Activated T-helper 2 cell treated with anti-CD3 and anti-CD28 coated beads, Interferon-gamma antibody, Interleukin-2, Interleukin-4, amounts not matched to agents 10 μg/mL and 5 μg/mL and 100 μg/mL, durations not matched to agents 14 hours and 24 hours and 36 hours (primary cell): ENCODE measurements at regions of chr5 and their contacts with region 1.

Region 1: GRCh38 chr5:154189819-154190594 is 526 bp upstream of the GALNT10 start:
- DNase-seq: peak; percentile 76
- H3K4me3 Mint-ChIP-seq: peak overlapping the region; percentile 83
- H3K27ac Mint-ChIP-seq: peak overlapping the region; percentile 60
- H3K4me1 Mint-ChIP-seq: peaks cover 37% of the 10 kb centered on the region
- H3K27me3 Mint-ChIP-seq: peaks cover 17% of the 10 kb centered on the region

Region 2: GRCh38 chr5:153551537-153552079 is 638.4 kb before region 1 on chr5:
- intact Hi-C with region 1: no loop called
- DNase-seq: no peak
- H3K4me3 Mint-ChIP-seq: no peak overlapping the region
- H3K27ac Mint-ChIP-seq: no peak overlapping the region
- H3K4me1 Mint-ChIP-seq: peaks cover 2% of the 10 kb centered on the region
- H3K27me3 Mint-ChIP-seq: no peaks in the 10 kb centered on the region

Region 3: DNA sequence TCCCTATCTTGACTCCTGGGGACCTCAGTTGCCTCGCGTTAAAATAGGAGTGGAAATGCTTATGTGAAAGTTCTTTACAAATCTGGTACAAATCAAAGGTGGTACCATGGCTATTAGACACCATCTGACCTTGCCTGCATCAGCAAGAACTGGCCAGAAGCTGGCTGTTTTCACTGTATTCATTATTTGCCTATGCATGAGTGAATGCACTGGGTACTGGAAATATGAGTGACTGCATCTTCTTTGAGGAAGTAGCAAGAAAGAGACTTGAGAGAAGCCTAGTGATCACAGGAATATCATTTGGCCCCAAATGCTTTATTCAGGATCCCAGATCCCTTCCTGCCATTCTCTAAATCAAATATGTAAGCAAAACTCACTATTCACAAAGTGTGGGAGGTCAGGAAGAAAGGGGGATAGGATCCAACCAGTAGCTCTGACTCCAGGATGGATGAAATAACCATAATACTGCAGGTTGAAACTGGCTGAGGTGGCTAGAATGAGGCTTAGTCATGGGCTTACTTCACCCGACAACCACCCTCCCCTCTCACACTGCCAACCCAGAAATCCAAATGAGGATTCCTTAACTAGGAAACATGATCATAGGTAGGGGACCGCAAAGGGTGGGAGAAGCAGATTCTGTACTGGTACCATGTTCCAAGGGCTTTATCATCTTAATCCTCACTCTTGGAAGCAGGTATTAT is 208.0 kb before region 1 on chr5:
- intact Hi-C with region 1: no loop called
- DNase-seq: no peak
- H3K4me3 Mint-ChIP-seq: no peak overlapping the region
- H3K27ac Mint-ChIP-seq: no peak overlapping the region
- H3K4me1 Mint-ChIP-seq: no peaks in the 10 kb centered on the region
- H3K27me3 Mint-ChIP-seq: peaks cover 7% of the 10 kb centered on the region

Region 4: GRCh38 chr5:154202379-154203260 is 12.6 kb after region 1 on chr5:
- intact Hi-C with region 1: loop called (anchors 1 kb)
- DNase-seq: peak; percentile 40
- H3K4me3 Mint-ChIP-seq: peak overlapping the region; percentile 57
- H3K27ac Mint-ChIP-seq: peak overlapping the region; percentile 73
- H3K4me1 Mint-ChIP-seq: peaks cover 49% of the 10 kb centered on the region
- H3K27me3 Mint-ChIP-seq: no peaks in the 10 kb centered on the region

Region 5: DNA sequence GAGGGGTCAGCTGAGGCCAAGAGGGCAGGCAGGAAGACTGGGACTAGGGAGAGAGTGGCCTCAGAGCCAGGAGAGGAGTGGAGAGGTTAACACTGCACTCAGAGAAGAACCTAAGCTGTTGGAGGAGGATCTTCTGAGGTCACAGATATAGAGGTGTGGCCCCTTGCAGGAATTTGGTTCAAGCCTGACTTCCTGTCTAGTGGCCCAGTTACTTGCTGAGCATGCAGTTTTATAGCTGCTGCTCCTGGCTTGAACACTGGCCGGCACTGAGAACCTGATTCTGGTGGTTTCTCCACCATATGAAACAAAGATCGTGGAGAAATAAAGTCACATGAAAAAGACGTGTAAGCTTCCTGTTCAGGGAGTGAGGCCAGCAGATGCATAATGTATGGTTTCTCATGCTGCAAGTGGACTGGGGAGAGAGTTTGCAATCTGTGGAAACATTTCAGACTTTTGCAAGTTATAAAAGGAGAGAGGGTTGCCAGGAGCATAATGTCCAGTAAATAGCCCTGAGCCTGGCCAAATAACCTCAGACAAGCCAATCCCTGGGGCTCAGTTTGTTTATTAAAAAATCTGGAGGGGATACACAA is 83.1 kb after region 1 on chr5:
- intact Hi-C with region 1: loop called (anchors 10 kb)
- DNase-seq: peak; percentile 11
- H3K4me3 Mint-ChIP-seq: no peak overlapping the region
- H3K27ac Mint-ChIP-seq: peak overlapping the region; percentile 40
- H3K4me1 Mint-ChIP-seq: peaks cover 52% of the 10 kb centered on the region
- H3K27me3 Mint-ChIP-seq: no peaks in the 10 kb centered on the region

Region 6: GRCh38 chr5:154445422-154446182 is 255.6 kb after region 1 on chr5 and contains the start of gene SAP30L:
- intact Hi-C with region 1: loop called (anchors 10 kb)
- DNase-seq: peak; percentile 96
- H3K4me3 Mint-ChIP-seq: peak within 1 kb of the TSS; percentile 98
- H3K27ac Mint-ChIP-seq: peak within 1 kb of the TSS; percentile 94
- H3K4me1 Mint-ChIP-seq: peaks cover 31% of the 10 kb centered on the region
- H3K27me3 Mint-ChIP-seq: no peaks in the 10 kb centered on the region
- total RNA-seq, gene SAP30L: 35.9 and 36.0 TPM in 2 replicates